Right lobe of liver (tissue), 6 donors: ENCODE measurements at regions of chr3 and their contacts with region 1.

Region 1: GRCh38 chr3:195106418-195106906 is 164.5 kb downstream of the XXYLT1 start:
- DNase-seq: peak; percentile 67 to 76 (median 73)
- ATAC-seq: peak; percentile 76 to 83 (median 80)
- H3K4me3 ChIP-seq: no peak overlapping the region
- H3K27ac ChIP-seq: no peak overlapping the region
- H3K4me1 ChIP-seq: peaks cover 0 to 24% (median 5%) of the 10 kb centered on the region in 4 donors
- H3K27me3 ChIP-seq: no peaks in the 10 kb centered on the region
- CTCF ChIP-seq: peak; percentile 99
- POLR2A ChIP-seq: no peak

Region 2: GRCh38 chr3:194682694-194683310 is 423.7 kb before region 1 on chr3:
- intact Hi-C with region 1: loop called in 1 of 2 experiments (anchors 2 kb)
- DNase-seq: peak in 2 of 3 donors; percentile 52 to 68
- ATAC-seq: peak; percentile 76 to 86 (median 83)
- H3K4me3 ChIP-seq: no peak overlapping the region
- H3K27ac ChIP-seq: no peak overlapping the region
- H3K4me1 ChIP-seq: peaks cover 0 to 30% (median 3%) of the 10 kb centered on the region in 4 donors
- H3K27me3 ChIP-seq: peaks cover 0 to 11% of the 10 kb centered on the region in 2 donors
- CTCF ChIP-seq: peak; percentile 83 to 92 (median 86)
- POLR2A ChIP-seq: no peak

Region 3: GRCh38 chr3:195001961-195002861 is 104.3 kb before region 1 on chr3:
- intact Hi-C with region 1: loop called in 1 of 2 experiments (anchors 5 kb)
- DNase-seq: peak; percentile 63 to 68 (median 65)
- ATAC-seq: peak; percentile 81 to 93 (median 82)
- H3K4me3 ChIP-seq: no peak overlapping the region
- H3K27ac ChIP-seq: no peak overlapping the region
- H3K4me1 ChIP-seq: no peaks in the 10 kb centered on the region
- H3K27me3 ChIP-seq: no peaks in the 10 kb centered on the region
- CTCF ChIP-seq: peak; percentile 53 to 59 (median 56)
- POLR2A ChIP-seq: no peak

Region 4: GRCh38 chr3:195035345-195036190 is 70.9 kb before region 1 on chr3:
- intact Hi-C with region 1: loop called in 1 of 2 experiments (anchors 10 kb)
- DNase-seq: peak in 2 of 3 donors; percentile 45 to 52
- ATAC-seq: no peak
- H3K4me3 ChIP-seq: no peak overlapping the region
- H3K27ac ChIP-seq: no peak overlapping the region
- H3K4me1 ChIP-seq: peaks cover 0 to 39% (median 21%) of the 10 kb centered on the region in 4 donors
- H3K27me3 ChIP-seq: no peaks in the 10 kb centered on the region
- CTCF ChIP-seq: peak in 1 of 4 donors; percentile 4
- POLR2A ChIP-seq: no peak

Region 5: DNA sequence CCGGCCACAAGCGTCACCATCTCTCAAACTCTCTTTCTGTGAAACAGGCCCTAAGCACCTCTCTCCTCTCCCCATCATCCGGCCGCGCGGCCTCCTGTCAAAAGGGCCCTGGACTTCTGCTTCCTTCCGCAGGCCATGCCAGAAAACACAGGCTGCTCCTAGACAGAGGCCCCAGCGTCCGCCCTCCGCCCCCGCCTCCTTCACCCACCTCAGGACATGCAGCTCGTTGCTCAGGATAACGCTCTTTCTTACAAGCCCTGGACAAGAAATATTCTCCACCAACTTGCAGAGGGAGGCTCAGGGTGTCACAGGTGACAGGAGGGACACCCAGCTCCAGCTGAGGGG is 47.5 kb before region 1 on chr3:
- intact Hi-C with region 1: no loop called
- DNase-seq: peak in 2 of 3 donors; percentile 48 to 58
- ATAC-seq: peak; percentile 17 to 55 (median 36)
- H3K4me3 ChIP-seq: no peak overlapping the region
- H3K27ac ChIP-seq: no peak overlapping the region
- H3K4me1 ChIP-seq: peaks cover 0 to 14% (median 6%) of the 10 kb centered on the region in 4 donors
- H3K27me3 ChIP-seq: no peaks in the 10 kb centered on the region
- CTCF ChIP-seq: no peak
- POLR2A ChIP-seq: no peak

Region 6: GRCh38 chr3:195172039-195172684 is 65.7 kb after region 1 on chr3:
- intact Hi-C with region 1: no loop called
- DNase-seq: no peak
- ATAC-seq: no peak
- H3K4me3 ChIP-seq: no peak overlapping the region
- H3K27ac ChIP-seq: no peak overlapping the region
- H3K4me1 ChIP-seq: no peaks in the 10 kb centered on the region
- H3K27me3 ChIP-seq: no peaks in the 10 kb centered on the region
- CTCF ChIP-seq: no peak
- POLR2A ChIP-seq: no peak